ENCODE measurements at regions of chr4 and their contacts with region 1.

Region 1: DNA sequence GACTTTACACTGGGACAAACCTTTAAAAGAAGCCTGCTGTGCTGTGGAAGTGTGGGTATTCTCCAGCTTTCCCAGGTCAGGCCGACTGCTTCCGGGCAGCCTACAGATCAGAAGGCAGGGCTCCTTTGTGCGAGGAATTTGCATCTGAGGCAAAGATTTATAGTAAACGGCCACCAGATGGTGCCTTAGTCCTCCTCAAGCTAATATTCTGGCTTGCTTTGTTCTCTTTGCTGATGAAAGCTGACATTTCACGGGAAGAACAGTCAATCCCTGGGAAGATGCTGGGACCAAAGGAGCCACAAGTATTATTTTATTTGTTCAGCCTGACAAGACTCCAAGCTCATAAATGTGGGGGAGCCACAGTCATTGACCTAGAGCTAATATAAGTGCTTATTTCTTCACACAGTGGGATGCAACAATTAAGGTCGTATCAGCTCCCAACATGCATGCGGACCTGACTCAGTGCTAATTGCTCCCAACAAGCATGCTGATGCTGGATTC is 120.7 kb upstream of the TRIM2 start:
- DNase-seq: peak; percentile 72
- ATAC-seq: peak; percentile 95
- H3K4me3 ChIP-seq: peak overlapping the region in 1 of 3 experiments; percentile 17; a peak in 2 of 6 replicates
- H3K27ac ChIP-seq: no peak overlapping the region
- H3K4me1 ChIP-seq: peaks cover 9% of the 10 kb centered on the region
- H3K27me3 ChIP-seq: peaks cover 0 to 1% of the 10 kb centered on the region in 2 experiments; a peak in 1 of 5 replicates
- CTCF ChIP-seq: peak; percentile 80
- EP300 ChIP-seq: no peak
- POLR2A ChIP-seq: no peak
- RAD21 ChIP-seq: peak; percentile 59

Region 2: DNA sequence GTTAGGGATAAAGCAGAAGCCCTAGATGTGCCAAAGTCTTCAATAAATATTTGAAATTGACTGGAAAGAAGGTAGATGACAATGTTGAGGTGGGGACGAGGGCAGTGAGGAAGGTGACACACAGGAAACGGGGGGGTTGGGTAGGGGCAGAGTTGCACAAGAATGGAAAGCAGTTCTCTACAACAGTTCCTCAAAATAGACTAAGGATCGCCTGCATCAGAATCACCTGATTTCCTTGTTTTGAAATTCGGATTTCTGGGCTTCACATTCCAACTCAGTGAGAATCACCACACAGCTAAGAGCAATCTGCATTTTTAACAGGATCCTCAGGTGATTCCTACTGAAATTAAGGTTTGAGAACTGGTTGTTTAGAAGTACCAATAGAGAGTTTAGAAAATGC is 233.1 kb before region 1 on chr4:
- CTCF ChIA-PET with region 1: interaction called, 39 read pairs
- POLR2A ChIA-PET with region 1: no interaction called
- in situ Hi-C with region 1: loop called (anchors 5 kb)
- intact Hi-C with region 1: loop called (anchors 1 kb)
- DNase-seq: peak; percentile 7
- ATAC-seq: no peak
- H3K4me3 ChIP-seq: no peak overlapping the region
- H3K27ac ChIP-seq: no peak overlapping the region
- H3K4me1 ChIP-seq: no peaks in the 10 kb centered on the region
- H3K27me3 ChIP-seq: no peaks in the 10 kb centered on the region
- CTCF ChIP-seq: no peak
- EP300 ChIP-seq: no peak
- POLR2A ChIP-seq: no peak
- RAD21 ChIP-seq: no peak

Region 3: DNA sequence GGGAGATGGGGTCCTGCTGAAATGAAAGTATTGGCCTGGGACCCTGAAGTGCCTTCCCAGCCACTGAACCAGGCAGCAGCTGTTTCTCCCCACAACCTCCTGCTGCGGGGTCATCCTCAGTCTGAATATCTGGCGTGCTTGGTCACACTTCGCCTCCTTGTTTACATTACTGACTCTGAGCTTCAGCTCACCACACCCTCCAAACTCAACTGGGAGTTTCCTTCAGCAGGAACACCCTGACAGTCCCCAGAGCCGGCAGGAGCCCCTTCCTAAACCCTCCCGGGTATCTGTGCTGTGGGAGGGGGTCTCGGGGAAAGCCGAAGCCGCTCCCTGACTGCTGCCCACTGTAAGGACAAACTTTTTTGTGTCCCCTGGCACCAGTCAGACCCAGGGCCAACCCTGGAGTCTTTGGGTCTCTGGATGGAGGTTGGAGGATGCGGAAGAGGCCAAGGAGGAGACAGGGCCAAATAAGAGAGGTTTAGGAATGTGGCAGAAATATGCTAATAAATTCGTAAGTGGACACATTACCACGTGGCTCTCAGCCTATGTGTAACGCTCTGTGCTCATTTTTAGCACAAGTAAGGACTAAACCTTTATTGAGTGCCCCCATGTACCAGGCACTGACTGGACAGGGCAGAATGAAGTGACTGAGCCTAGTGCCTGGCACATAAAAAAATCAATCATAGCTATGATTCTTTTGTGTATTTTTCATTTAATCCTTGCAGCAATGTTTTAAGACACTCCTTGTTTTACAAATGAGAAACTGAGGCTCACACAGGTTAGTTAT is 126.7 kb before region 1 on chr4:
- CTCF ChIA-PET with region 1: no interaction called
- POLR2A ChIA-PET with region 1: no interaction called
- in situ Hi-C with region 1: no loop called
- intact Hi-C with region 1: loop called (anchors 10 kb)
- DNase-seq: peak; percentile 18
- ATAC-seq: peak; percentile 72
- H3K4me3 ChIP-seq: peak overlapping the region in 1 of 3 experiments; percentile 36; a peak in 2 of 6 replicates
- H3K27ac ChIP-seq: no peak overlapping the region
- H3K4me1 ChIP-seq: peaks cover 38% of the 10 kb centered on the region
- H3K27me3 ChIP-seq: no peaks in the 10 kb centered on the region
- CTCF ChIP-seq: no peak
- EP300 ChIP-seq: no peak
- POLR2A ChIP-seq: no peak
- RAD21 ChIP-seq: no peak

Region 4: DNA sequence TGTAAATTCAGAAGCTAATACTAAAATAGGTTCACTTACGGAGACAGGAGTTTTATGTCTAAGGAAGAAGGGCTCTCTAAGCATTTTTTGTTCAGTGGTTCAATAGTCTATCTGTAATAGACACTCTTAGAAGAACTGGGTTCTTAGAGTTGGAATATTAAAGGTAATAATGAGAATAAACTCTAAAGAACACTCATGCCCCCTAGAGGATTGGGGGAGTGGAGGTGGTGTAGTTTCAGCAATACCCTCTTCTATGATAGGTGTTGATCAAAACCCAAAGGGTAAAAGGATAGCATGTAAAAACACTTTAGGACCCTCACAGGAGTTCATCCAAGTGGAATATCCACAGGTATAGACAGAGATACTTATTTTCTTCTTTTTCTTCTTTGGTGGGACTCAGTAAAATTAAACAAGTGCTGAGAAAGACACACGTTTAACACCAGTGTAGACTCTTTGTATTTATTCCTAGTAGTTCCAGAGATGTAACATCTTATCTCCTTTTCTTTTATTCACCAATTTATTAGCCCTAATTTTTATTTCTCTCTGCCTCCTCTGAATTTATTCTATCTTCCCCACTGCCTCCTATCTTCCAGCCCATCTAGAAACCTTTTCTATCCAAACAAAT is 235.3 kb after region 1 on chr4:
- CTCF ChIA-PET with region 1: no interaction called
- POLR2A ChIA-PET with region 1: no interaction called
- in situ Hi-C with region 1: no loop called
- intact Hi-C with region 1: loop called (anchors 5 kb)
- DNase-seq: peak; percentile 40
- ATAC-seq: peak; percentile 78
- H3K4me3 ChIP-seq: no peak overlapping the region
- H3K27ac ChIP-seq: no peak overlapping the region
- H3K4me1 ChIP-seq: peaks cover 13% of the 10 kb centered on the region
- H3K27me3 ChIP-seq: no peaks in the 10 kb centered on the region
- CTCF ChIP-seq: peak; percentile 67
- EP300 ChIP-seq: no peak
- POLR2A ChIP-seq: no peak
- RAD21 ChIP-seq: 0 out of 2 replicates have a peak, but pooled peaks have one; percentile 41